CD4-positive, alpha-beta memory T cell (primary cell): ENCODE measurements at regions of chr19 and their contacts with region 1.

Region 1: DNA sequence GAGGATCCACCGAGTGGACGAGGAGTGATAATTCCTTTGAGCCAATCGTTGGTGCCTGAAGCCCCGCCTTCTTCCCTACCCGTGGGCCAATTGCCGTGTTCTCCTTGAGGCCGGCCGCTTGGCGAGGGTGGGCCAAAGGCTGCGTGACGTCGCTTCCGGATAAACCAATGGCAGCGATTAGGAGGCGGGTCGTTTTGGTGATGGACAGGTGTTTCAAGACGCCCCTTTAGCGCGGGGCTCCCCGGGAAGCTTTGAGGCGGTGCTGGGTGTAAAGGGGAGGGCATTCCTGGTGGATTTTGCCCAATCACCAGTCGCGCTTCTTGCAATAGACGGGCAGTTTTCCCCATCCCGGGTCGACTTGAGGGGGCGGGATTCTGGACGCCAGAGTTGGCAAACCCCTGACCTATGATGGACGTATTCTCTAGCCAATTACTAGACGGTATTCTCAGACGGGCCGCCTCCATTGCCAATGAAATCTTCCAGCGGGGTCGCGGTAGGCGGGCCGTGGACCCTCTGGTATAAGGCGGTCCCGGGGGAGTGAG is 310 bp upstream of the PRMT1 start:
- DNase-seq: peak; percentile 97 to 99 (median 98)
- H3K4me3 ChIP-seq: peak overlapping the region; percentile 69 to 79
- H3K4me3 Mint-ChIP-seq: peak overlapping the region; percentile 95 to 100 (median 99)
- H3K27ac ChIP-seq: peak overlapping the region; percentile 93
- H3K27ac Mint-ChIP-seq: peak overlapping the region; percentile 99 to 100 (median 99)
- H3K4me1 ChIP-seq: peaks cover 48% of the 10 kb centered on the region
- H3K4me1 Mint-ChIP-seq: peaks cover 19 to 54% (median 37%) of the 10 kb centered on the region in 4 donors
- H3K27me3 ChIP-seq: no peaks in the 10 kb centered on the region
- H3K27me3 Mint-ChIP-seq: no peaks in the 10 kb centered on the region

Region 2: DNA sequence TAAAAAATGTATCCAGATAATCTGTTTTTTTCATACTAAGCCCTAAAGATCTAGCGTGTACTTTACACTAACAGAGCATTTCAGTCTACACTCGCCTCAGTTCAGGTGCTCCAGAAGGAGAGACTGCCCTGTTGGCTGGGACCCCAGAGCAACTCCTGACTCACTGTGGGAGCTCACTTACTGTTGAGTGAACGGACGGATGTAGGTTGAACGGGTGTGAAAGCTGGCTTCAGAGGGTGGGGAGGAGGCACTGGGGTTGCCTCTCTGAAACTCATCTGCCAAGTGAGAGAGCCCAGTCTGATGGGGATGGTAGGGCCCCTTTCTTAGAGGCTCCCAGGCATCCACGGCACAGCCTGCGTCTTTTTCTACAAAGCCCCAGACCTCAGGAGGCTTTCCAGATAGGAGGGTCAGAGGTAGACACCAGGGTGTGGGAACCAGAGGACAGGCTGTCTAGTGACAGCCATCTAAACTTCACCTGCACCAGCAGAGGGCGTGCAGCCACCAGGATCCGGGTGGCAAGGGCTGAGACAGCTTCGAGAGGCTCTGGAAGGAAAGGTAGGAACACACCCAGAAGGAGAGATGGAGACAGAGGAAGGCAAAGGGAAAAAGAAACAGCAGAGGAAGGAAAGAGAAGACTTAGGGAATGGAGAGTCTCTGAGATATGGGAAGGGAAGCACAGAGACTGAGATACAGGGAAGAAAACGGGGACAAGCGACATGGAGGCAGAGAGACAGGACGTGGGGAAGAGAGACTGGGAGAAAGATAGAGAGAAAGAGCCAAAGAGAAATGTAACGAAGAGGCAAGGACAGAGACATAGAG is 285.0 kb before region 1 on chr19:
- CTCF ChIA-PET with region 1: interaction called, 6 read pairs
- POLR2A ChIA-PET with region 1: no interaction called
- intact Hi-C with region 1: loop called (anchors 1 kb)
- DNase-seq: peak; percentile 76 to 80 (median 78)
- H3K4me3 ChIP-seq: no peak overlapping the region
- H3K4me3 Mint-ChIP-seq: no peak overlapping the region
- H3K27ac ChIP-seq: no peak overlapping the region
- H3K27ac Mint-ChIP-seq: peak overlapping the region in 6 of 7 donors; percentile 9 to 85 (median 60)
- H3K4me1 ChIP-seq: peaks cover 21% of the 10 kb centered on the region
- H3K4me1 Mint-ChIP-seq: peaks cover 8 to 24% (median 11%) of the 10 kb centered on the region in 4 donors
- H3K27me3 ChIP-seq: no peaks in the 10 kb centered on the region
- H3K27me3 Mint-ChIP-seq: no peaks in the 10 kb centered on the region

Region 3: DNA sequence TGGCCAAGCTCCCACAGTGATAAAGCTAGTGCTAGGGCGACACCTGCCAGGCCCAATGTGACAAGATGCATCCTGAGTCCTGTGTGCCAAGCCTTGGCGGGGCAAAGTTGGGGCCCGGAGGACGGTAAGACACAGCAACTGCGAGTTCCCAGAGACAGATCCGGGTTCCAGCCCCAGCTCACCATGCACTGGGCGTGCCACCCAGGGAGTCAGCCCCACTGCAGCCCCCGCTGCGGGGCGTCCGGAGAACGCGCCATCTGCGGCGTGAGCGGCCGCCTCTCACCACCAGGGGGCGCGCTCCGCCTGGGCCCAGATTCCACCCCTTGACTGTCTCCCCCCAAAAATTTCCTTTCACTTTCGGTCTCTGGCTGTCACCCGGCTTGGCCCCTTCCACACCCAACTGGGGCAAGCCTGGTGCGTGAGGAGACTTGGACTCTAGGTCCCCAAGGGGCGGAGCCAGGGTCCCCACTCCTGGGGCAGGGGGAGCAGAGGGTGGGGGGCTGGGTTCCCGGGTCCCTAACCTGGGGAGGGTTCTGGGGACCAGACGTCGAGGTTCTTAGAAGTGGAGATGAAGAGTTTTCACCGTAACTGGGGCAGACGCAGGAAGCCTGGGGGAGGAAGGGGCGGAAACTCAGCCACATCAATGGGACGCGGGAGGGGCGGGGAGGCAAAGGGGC is 202.8 kb before region 1 on chr19 and contains the start of gene FLT3LG:
- CTCF ChIA-PET with region 1: interaction called, 8 read pairs
- POLR2A ChIA-PET with region 1: interaction called, 17 read pairs
- intact Hi-C with region 1: loop called (anchors 1 kb)
- DNase-seq: peak; percentile 96 to 97 (median 97)
- H3K4me3 ChIP-seq: peak within 1 kb of the TSS; percentile 77 to 94
- H3K4me3 Mint-ChIP-seq: peak within 1 kb of the TSS; percentile 90 to 99 (median 94)
- H3K27ac ChIP-seq: peak within 1 kb of the TSS; percentile 96
- H3K27ac Mint-ChIP-seq: peak within 1 kb of the TSS; percentile 91 to 99 (median 98)
- H3K4me1 ChIP-seq: peaks cover 64% of the 10 kb centered on the region
- H3K4me1 Mint-ChIP-seq: peaks cover 27 to 71% (median 46%) of the 10 kb centered on the region in 4 donors
- H3K27me3 ChIP-seq: no peaks in the 10 kb centered on the region
- H3K27me3 Mint-ChIP-seq: no peaks in the 10 kb centered on the region
- total RNA-seq, gene FLT3LG: 114 to 115 TPM

Region 4: DNA sequence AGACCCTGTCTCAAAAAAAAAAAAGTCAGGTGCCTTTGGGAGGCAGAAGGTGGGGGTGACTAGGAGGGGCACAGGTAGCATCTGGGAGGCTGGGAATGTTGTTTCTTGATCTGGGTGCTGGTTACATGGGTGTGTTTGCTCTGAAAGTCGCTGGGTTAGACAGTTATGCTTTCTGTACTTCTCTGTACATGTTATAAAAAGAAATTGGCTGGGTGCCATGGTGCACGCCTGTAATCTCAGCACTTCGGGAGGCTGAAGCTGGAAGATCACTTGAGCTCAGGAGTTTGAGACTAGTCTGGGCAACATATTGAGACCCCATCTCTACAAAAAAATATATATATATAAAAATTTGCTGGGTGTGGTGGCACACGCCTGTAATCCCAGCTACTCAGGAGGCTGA is 111.5 kb before region 1 on chr19:
- CTCF ChIA-PET with region 1: interaction called, 52 read pairs
- POLR2A ChIA-PET with region 1: interaction called, 51 read pairs
- intact Hi-C with region 1: no loop called
- DNase-seq: peak in 2 of 5 donors; percentile 41 to 43
- H3K4me3 ChIP-seq: no peak overlapping the region
- H3K4me3 Mint-ChIP-seq: peak overlapping the region in 7 of 8 donors; percentile 59 to 79 (median 68)
- H3K27ac ChIP-seq: peak overlapping the region; percentile 58
- H3K27ac Mint-ChIP-seq: peak overlapping the region; percentile 91 to 98 (median 93)
- H3K4me1 ChIP-seq: peaks cover 98% of the 10 kb centered on the region
- H3K4me1 Mint-ChIP-seq: peaks cover 54 to 89% (median 73%) of the 10 kb centered on the region in 4 donors
- H3K27me3 ChIP-seq: no peaks in the 10 kb centered on the region
- H3K27me3 Mint-ChIP-seq: no peaks in the 10 kb centered on the region

Region 5: DNA sequence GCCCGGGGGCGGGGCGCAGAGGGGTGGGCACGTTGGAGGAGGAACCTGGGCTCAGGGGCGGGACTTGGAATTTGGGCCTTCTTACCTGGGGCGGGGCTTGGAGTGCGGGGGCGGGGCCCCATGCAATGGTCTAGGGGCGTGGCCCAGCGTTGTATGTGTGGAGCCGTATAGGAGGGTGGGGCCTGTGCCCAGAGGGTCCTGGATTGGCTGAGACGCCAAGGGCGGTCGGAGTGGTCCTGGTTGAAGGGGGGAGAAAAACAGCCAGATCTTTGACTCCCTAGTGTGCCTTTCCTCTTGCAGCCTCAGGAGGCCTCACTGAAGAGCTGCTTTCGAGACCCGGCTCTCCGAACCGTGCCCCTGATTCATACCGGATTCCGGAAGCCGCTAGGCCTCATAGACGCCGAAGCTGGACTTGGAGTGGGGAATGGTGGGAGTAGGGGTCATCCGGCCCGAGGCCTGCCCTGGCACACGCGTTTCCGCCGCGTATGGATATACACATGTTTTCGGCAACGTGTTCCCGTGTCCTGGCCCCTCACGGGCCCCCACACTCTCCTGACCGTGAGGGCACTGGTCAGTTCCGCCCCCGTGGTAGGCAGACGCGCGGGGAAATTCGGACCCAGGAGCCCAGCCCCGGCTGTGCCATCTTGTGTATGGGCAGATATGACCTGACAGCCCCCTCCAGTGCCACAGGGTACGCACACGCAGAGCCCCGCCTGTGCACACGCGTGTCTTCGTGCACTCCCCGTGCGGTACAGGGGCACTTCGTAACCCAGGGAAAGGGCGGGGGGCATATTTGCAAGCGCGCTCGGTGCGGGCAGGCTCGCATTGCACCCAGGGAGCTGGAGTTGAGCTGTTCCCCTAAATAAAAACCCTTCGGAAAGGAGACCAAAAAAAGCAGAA is 86.4 kb before region 1 on chr19:
- CTCF ChIA-PET with region 1: interaction called, 12 read pairs
- POLR2A ChIA-PET with region 1: interaction called, 21 read pairs
- intact Hi-C with region 1: loop called (anchors 1 kb)
- DNase-seq: peak; percentile 94 to 96 (median 95)
- H3K4me3 ChIP-seq: peak overlapping the region; percentile 68 to 95
- H3K4me3 Mint-ChIP-seq: peak overlapping the region; percentile 81 to 95 (median 93)
- H3K27ac ChIP-seq: peak overlapping the region; percentile 74
- H3K27ac Mint-ChIP-seq: peak overlapping the region; percentile 84 to 97 (median 94)
- H3K4me1 ChIP-seq: peaks cover 23% of the 10 kb centered on the region
- H3K4me1 Mint-ChIP-seq: peaks cover 21 to 48% (median 31%) of the 10 kb centered on the region in 4 donors
- H3K27me3 ChIP-seq: no peaks in the 10 kb centered on the region
- H3K27me3 Mint-ChIP-seq: no peaks in the 10 kb centered on the region

Region 6: DNA sequence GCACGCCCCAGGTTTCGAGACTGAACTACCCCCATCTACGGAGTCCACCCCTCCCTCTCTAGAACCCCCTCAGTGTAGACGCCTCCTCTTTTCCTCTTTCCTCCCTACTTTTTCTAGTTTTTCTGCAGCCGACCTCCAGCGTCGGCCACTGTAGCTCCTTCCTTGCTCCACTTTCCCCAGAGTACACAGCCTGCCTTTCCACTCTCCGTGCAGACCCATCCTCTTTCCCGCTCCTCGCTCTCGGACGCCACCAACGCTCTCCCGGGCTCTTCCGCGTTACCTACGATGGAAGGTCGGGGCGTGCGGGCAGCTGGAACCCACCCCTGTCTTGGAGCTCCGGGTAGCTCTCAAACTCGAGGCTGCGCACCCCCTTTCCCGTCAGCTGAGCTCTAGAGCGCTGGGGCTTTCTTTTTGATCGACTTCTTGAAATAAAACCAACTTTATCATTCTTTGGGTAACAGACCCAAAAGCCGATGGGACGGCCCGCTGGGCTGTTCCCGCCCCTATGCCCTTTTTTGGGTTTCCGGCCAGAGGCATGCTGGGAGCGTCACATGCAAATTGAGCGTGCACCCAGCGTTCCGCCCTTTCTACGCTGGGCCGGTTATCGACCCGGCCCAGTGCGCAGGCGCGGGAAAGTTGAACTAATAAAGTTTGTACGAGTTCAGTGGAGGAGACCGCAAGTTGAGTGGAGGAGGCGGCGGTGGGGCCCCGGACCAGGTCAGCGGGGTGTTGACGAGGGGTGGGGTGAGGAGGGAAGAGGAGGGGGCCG is 11.2 kb before region 1 on chr19 and contains the starts of genes BCL2L12 and IRF3:
- CTCF ChIA-PET with region 1: interaction called, 15 read pairs
- POLR2A ChIA-PET with region 1: interaction called, 125 read pairs
- intact Hi-C with region 1: loop called (anchors 1 kb)
- DNase-seq: peak; percentile 99
- H3K4me3 ChIP-seq: peak within 1 kb of the TSS; percentile 99
- H3K4me3 Mint-ChIP-seq: peak within 1 kb of the TSS; percentile 95 to 100 (median 97)
- H3K27ac ChIP-seq: peak within 1 kb of the TSS; percentile 93
- H3K27ac Mint-ChIP-seq: peak within 1 kb of the TSS; percentile 95 to 100 (median 99)
- H3K4me1 ChIP-seq: peaks cover 31% of the 10 kb centered on the region
- H3K4me1 Mint-ChIP-seq: peaks cover 19 to 56% (median 31%) of the 10 kb centered on the region in 4 donors
- H3K27me3 ChIP-seq: no peaks in the 10 kb centered on the region
- H3K27me3 Mint-ChIP-seq: no peaks in the 10 kb centered on the region
- total RNA-seq, gene BCL2L12: 21.9 to 22.1 TPM
- total RNA-seq, gene IRF3: 366 to 386 TPM

Region 7: GRCh38 chr19:49983645-49984229 is 307.0 kb after region 1 on chr19:
- CTCF ChIA-PET with region 1: no interaction called
- POLR2A ChIA-PET with region 1: no interaction called
- intact Hi-C with region 1: loop called (anchors 1 kb)
- DNase-seq: peak; percentile 68 to 75 (median 72)
- H3K4me3 ChIP-seq: no peak overlapping the region
- H3K4me3 Mint-ChIP-seq: no peak overlapping the region
- H3K27ac ChIP-seq: no peak overlapping the region
- H3K27ac Mint-ChIP-seq: peak overlapping the region in 2 of 7 donors; percentile 40 to 68
- H3K4me1 ChIP-seq: no peaks in the 10 kb centered on the region
- H3K4me1 Mint-ChIP-seq: peaks cover 0 to 10% (median 6%) of the 10 kb centered on the region in 4 donors
- H3K27me3 ChIP-seq: no peaks in the 10 kb centered on the region
- H3K27me3 Mint-ChIP-seq: no peaks in the 10 kb centered on the region